ENCODE measurements at regions of chr7 and their contacts with region 1.

Region 1: DNA sequence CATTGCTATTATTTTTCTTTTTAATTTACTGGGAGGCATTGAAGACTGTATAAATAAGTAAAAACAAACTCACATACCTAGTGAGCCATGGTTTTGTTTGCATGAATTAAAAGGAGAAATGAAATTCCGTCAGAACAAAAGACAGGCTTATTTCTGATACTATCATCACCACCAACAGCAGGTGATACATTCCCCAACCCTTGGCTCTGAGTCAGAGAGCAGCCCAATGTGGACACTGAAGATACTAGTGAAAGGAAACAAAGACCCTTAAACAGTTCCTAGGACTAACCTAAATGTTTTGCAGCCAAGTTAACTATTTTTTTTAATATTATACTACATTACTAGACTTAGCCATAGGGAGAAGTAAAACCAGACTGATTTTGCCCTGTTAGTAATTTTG is 31.6 kb downstream of the CHRM2 start:
- DNase-seq: no peak
- H3K4me3 ChIP-seq: no peak overlapping the region
- H3K27ac ChIP-seq: no peak overlapping the region
- H3K4me1 ChIP-seq: no peaks in the 10 kb centered on the region
- H3K27me3 ChIP-seq: no peaks in the 10 kb centered on the region
- CTCF ChIP-seq: no peak
- EP300 ChIP-seq: no peak
- POLR2A ChIP-seq: no peak

Region 2: DNA sequence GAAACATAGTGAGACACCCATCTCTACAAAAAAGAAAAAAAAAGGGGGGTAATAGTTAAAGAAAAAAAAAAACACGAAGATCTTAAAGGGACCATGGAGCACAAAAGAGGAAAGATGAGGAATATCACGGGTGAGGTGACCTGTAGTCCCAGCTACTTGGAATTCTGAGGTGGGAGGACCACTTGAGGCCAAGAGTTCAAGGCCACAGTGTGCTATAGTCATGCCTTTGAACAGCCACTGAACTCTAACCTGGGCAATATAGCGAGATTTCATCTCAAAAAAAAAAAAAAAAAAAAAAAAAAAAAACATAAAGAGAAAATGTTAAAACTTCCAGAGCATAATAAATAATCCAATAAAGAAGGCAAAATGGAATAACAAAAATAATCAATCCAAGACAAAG is 1199.8 kb after region 1 on chr7:
- intact Hi-C with region 1: loop called in 1 of 4 experiments (anchors 5 kb)
- DNase-seq: no peak
- H3K4me3 ChIP-seq: no peak overlapping the region
- H3K27ac ChIP-seq: no peak overlapping the region
- H3K4me1 ChIP-seq: no peaks in the 10 kb centered on the region
- H3K27me3 ChIP-seq: no peaks in the 10 kb centered on the region
- CTCF ChIP-seq: no peak
- EP300 ChIP-seq: no peak
- POLR2A ChIP-seq: no peak

Measured in ovary (tissue), 10 donors.